B cell (primary cell): ENCODE measurements at regions of chr13 and their contacts with region 1.

Region 1: DNA sequence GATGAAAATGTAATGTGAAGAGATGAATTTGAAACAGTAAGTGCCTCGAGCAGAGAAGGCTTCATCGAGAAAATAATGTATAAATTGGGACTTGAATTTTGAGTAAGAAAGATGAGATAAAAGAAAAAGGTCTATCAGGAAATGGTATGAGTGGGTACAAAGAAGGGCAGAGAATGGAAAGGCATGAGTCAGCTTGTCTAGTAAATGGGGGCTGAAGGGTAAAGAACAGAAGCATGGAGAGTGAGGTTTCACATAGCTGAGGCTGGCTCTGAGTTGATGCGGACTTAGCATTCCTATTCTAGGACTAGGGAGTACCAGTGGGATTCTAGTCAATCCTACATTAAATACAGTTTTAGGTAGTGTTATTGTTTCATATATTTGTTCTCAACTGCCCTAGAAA is 85.8 kb downstream of the ZC3H13 start:
- DNase-seq: no peak
- ATAC-seq: no peak
- H3K4me3 ChIP-seq: no peak overlapping the region
- H3K4me3 Mint-ChIP-seq: no peak overlapping the region
- H3K27ac ChIP-seq: no peak overlapping the region
- H3K27ac Mint-ChIP-seq: no peak overlapping the region
- H3K4me1 ChIP-seq: no peaks in the 10 kb centered on the region
- H3K4me1 Mint-ChIP-seq: no peaks in the 10 kb centered on the region
- H3K27me3 ChIP-seq: no peaks in the 10 kb centered on the region
- H3K27me3 Mint-ChIP-seq: no peaks in the 10 kb centered on the region
- CTCF ChIP-seq: no peak

Region 2: GRCh38 chr13:46126552-46127357 is 160.0 kb after region 1 on chr13:
- CTCF ChIA-PET with region 1: no interaction called
- POLR2A ChIA-PET with region 1: no interaction called
- intact Hi-C with region 1: loop called (anchors 10 kb)
- DNase-seq: peak; percentile 74
- ATAC-seq: peak; percentile 92
- H3K4me3 ChIP-seq: no peak overlapping the region
- H3K4me3 Mint-ChIP-seq: no peak overlapping the region
- H3K27ac ChIP-seq: peak overlapping the region in 1 of 2 donors; percentile 78
- H3K27ac Mint-ChIP-seq: peak overlapping the region; percentile 88
- H3K4me1 ChIP-seq: peaks cover 13 to 16% of the 10 kb centered on the region in 2 donors
- H3K4me1 Mint-ChIP-seq: peaks cover 30% of the 10 kb centered on the region
- H3K27me3 ChIP-seq: no peaks in the 10 kb centered on the region
- H3K27me3 Mint-ChIP-seq: no peaks in the 10 kb centered on the region
- CTCF ChIP-seq: peak; percentile 80